ENCODE measurements at regions of chr19 and their contacts with region 1.

Region 1: DNA sequence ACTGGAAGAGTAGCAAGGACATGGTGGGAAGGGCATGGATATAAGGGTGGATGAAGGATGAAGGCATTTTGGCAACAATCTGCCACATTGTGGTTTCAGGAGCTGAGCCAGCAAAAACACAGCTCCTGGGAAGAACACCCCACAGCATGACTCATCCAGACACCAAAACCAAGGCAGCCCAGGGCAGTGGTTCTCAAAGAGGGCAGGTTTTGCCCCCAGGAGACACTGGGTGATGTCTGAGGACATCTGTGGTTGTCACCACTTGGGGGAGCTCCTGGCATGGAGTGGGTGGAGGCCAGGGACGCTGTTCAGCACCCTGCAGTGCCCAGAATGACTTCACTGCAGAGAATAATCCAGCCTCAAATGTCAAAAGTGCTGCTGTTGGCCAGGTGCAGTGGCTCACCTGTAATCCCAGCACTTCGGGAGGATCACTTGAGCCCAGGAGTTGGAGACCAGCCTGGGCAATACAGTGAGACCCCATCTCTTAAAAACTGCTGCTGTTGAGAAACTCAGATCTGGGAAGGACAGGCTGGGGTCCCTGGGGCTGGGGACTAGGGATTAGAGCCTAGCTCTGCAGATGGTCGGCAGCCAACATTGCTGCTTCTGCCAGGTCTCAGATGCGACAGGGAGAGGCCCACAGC is 16.1 kb downstream of the ZFR2 start:
- H3K4me3 ChIP-seq: no peak overlapping the region
- H3K27ac ChIP-seq: no peak overlapping the region
- H3K4me1 ChIP-seq: no peaks in the 10 kb centered on the region
- CTCF ChIP-seq: no peak

Region 2: DNA sequence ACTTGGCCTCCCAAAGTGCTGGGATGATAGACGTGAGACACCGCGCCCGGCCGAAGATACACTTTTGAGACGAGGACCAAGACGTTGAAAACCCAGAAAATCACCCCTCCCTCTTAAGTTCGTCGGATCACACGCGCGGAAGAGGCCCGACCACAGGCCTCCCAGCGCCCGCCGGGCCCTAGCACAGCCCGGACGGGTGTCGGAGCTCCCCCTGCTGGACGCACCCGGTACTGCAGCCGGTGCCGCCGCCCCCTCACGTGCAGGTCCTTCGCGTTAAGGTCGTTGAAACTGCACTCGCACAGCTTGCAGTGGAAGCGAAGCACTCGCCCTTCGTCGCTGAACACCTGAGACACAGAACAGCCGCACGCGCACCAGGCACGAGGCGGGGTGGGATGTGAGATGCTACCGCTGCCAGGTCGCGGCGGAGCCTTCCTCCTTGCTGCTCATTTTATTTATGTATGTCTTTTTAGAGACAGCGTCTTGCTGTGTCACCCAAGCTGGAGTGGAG is 30.8 kb before region 1 on chr19:
- CTCF ChIA-PET with region 1: interaction called, 13 read pairs
- POLR2A ChIA-PET with region 1: no interaction called
- H3K4me3 ChIP-seq: no peak overlapping the region
- H3K27ac ChIP-seq: no peak overlapping the region
- H3K4me1 ChIP-seq: no peaks in the 10 kb centered on the region
- CTCF ChIP-seq: peak; percentile 95

Region 3: GRCh38 chr19:3832001-3832400 is 20.7 kb before region 1 on chr19:
- CTCF ChIA-PET with region 1: no interaction called
- POLR2A ChIA-PET with region 1: no interaction called
- H3K4me3 ChIP-seq: no peak overlapping the region
- H3K27ac ChIP-seq: no peak overlapping the region
- H3K4me1 ChIP-seq: no peaks in the 10 kb centered on the region
- CTCF ChIP-seq: no peak

Region 4: DNA sequence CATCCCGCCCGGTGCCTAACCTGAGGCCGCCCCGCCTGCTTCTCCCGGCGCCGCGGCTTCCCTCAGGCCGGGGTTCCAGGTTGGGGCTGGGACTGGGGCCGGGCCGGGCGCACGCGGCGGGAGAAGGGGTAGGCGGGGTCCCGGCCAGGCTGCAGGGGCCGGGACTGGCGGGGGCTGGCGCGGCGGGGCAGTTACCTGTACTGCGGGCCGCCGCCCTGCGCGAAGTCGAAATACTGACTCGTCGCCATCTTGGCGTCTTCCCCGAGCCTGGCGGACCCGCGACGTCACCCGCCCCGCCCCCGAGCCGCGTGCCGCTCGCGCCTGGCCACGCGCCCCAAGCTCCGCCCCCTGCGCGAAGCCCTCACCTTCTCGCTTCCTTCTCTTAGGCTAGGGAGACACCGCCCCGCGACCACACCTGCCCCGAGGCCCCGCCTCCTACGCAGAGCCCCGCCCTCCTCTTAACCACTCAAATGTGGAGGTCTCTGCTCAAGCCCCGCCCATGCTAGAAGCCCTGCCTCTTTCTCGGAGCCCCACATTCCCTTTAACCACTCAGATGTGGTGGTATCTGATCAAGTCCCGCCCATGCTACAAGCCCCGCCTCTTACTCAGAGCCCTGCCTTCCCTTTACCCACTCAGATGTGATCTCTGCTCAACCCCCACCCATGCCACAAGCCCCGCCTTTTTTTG is 16.2 kb after region 1 on chr19 and contains the start of gene ZFR2:
- CTCF ChIA-PET with region 1: interaction called, 11 read pairs
- POLR2A ChIA-PET with region 1: no interaction called
- H3K4me3 ChIP-seq: no peak within 1 kb of the TSS
- H3K27ac ChIP-seq: no peak within 1 kb of the TSS
- H3K4me1 ChIP-seq: no peaks in the 10 kb centered on the region
- CTCF ChIP-seq: no peak

Region 5: DNA sequence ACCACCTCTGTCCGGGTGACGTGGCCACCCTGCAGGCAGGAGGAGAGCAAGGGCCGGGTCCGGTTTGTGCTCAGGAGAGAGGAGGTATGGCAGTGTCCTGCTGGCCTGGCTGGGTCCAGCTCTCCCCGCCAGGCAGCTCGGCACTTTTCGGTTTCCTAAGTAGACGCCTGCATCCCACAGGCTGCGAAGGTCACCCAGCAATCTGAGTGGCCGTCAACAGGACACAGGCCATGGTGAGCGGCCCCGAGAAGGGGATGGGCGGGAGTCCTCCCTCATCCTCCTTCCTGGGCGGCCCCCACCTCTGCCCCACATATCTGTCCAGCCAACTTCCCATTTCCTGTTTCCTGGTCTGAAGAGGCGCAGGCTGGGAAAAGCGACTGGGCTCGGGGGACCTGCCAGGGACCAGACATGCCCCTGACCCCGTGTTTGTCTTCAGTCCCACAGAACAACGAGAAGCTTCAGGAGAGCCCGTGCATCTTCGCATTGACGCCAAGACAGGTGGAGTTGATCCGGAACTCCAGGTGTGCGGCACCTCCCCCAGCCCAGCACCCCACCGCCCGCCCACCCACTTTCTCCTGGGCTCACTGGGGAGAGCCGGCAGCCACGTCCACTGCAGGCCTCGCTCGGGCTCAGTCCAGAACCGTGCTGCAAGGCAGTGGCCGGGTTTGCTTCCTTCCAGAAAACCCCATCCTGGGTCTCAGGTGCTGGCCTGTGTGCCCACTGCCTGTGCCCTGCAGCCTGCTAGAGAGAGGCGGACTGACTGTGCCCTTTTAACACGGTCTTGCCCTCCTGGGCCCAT is 171.1 kb after region 1 on chr19:
- CTCF ChIA-PET with region 1: no interaction called
- POLR2A ChIA-PET with region 1: no interaction called
- H3K4me3 ChIP-seq: no peak overlapping the region
- H3K27ac ChIP-seq: no peak overlapping the region
- H3K4me1 ChIP-seq: no peaks in the 10 kb centered on the region
- CTCF ChIP-seq: no peak

Measured in HEK293 (cell line).